ENCODE measurements at regions of chr11 and their contacts with region 1.

Region 1: GRCh38 chr11:44338698-44339529 is 29.0 kb upstream of the ALX4 start:
- DNase-seq: no peak
- H3K4me3 ChIP-seq: no peak overlapping the region
- H3K27ac ChIP-seq: no peak overlapping the region
- H3K4me1 ChIP-seq: peaks cover 3 to 7% (median 5%) of the 10 kb centered on the region in 4 experiments; a peak in 6 of 7 replicates
- H3K27me3 ChIP-seq: peaks cover 5 to 44% (median 34%) of the 10 kb centered on the region in 4 experiments
- CTCF ChIP-seq: no peak
- EP300 ChIP-seq: no peak
- POLR2A ChIP-seq: no peak
- RAD21 ChIP-seq: no peak

Region 2: GRCh38 chr11:44326615-44327475 is 12.1 kb before region 1 on chr11:
- CTCF ChIA-PET with region 1: interaction called, 18 read pairs
- POLR2A ChIA-PET with region 1: interaction called, 10 read pairs
- DNase-seq: no peak
- H3K4me3 ChIP-seq: no peak overlapping the region
- H3K27ac ChIP-seq: no peak overlapping the region
- H3K4me1 ChIP-seq: peaks cover 0 to 4% (median 1%) of the 10 kb centered on the region in 4 experiments; a peak in 3 of 7 replicates
- H3K27me3 ChIP-seq: peaks cover 30 to 76% (median 70%) of the 10 kb centered on the region in 4 experiments
- CTCF ChIP-seq: peak; percentile 30 to 39 (median 32); a peak in 3 of 4 replicates
- EP300 ChIP-seq: no peak
- POLR2A ChIP-seq: no peak
- RAD21 ChIP-seq: peak; percentile 59

Measured in H1 (cell line).